Endothelial cell of umbilical vein (primary cell): ENCODE measurements at regions of chr2 and their contacts with region 1.

Region 1: DNA sequence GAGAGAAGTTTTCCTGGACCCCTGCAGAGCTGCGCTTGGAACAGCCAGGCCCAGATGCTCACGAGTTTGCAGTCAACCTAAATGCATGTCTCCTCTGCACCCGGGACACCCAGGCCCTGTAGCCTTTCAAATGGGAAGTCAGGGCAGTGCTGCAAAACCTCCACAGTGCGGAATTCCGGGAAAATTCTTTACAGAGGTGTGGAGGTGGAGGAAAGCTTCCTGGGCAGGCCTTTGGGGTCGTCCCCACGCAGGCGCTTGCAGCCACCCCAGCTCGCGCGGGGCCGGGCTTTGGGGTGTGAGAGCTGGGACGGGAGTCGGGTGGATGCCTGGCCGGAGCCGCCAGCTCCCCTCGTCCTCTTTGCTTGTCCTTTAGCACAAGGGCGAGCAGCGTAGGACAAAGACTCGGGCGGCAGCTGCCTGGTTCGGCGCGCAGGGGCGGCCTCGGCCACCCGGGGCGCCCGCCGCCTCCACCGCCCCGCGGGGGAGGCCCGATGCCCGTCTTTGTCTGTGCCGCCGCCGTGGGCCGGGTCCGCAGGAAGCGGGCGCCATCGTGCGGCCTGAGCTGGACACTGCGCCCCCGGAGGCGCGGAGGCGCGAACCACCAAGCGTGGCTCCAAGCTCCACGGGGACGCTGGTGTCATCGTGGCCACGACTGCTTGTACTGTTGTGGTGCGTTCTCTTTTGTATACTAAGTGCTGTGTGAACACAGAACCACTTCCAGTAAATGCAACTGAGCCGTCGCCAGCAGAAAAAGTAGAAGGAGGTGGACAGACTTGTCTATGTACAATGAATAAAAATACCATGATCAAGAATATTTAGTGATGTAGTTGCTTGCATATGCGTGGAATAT is 28.2 kb upstream of the BCL11A start:
- DNase-seq: peak; percentile 49
- H3K4me3 ChIP-seq: peak overlapping the region in 1 of 3 experiments; percentile 21
- H3K27ac ChIP-seq: no peak overlapping the region
- H3K4me1 ChIP-seq: no peaks in the 10 kb centered on the region
- H3K27me3 ChIP-seq: peaks cover 5 to 7% of the 10 kb centered on the region in 2 experiments
- CTCF ChIP-seq: peak; percentile 92 to 94
- POLR2A ChIP-seq: no peak

Region 2: DNA sequence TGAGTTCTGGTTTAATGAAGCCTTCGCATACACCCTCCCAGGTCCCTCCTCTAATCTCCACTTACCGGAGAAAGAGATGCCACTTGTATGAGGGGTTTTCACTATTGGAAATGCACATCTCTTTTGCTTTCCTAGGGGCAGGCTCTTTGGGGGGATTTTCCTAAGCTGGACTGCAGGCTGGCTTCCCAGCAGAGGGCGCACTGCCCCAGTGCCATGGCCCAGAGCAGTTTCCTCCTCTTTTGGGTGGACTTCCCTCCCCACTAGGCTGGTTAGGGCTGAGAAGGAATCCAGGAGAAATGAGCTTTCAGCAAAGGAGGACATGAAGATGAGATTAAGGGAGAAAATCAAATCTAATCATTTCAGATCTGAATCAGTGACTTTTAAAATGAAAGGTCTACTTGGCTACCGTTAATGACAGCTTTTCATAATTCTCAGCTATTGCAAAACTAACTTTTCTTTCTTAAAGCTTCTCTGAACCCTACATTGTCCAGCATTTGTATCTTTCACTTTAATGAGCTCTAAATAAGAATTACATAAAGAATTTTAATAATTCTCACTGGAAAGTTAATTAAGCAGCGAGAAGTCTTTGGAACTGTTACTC is 1556.4 kb before region 1 on chr2:
- CTCF ChIA-PET with region 1: interaction called, 22 read pairs
- POLR2A ChIA-PET with region 1: no interaction called
- dilution Hi-C with region 1: no loop called
- intact Hi-C with region 1: loop called (anchors 1 kb)
- DNase-seq: peak; percentile 8
- H3K4me3 ChIP-seq: no peak overlapping the region
- H3K27ac ChIP-seq: no peak overlapping the region
- H3K4me1 ChIP-seq: no peaks in the 10 kb centered on the region
- H3K27me3 ChIP-seq: no peaks in the 10 kb centered on the region
- CTCF ChIP-seq: peak; percentile 55 to 61
- POLR2A ChIP-seq: no peak

Region 3: GRCh38 chr2:60560734-60561644 is 20.7 kb before region 1 on chr2:
- CTCF ChIA-PET with region 1: interaction called, 124 read pairs
- POLR2A ChIA-PET with region 1: no interaction called
- dilution Hi-C with region 1: no loop called
- intact Hi-C with region 1: loop called (anchors 1 kb)
- DNase-seq: no peak
- H3K4me3 ChIP-seq: no peak overlapping the region
- H3K27ac ChIP-seq: no peak overlapping the region
- H3K4me1 ChIP-seq: no peaks in the 10 kb centered on the region
- H3K27me3 ChIP-seq: peaks cover 24 to 52% of the 10 kb centered on the region in 2 experiments
- CTCF ChIP-seq: peak; percentile 41 to 42
- POLR2A ChIP-seq: no peak

Region 4: GRCh38 chr2:60569680-60570111 is 12.0 kb before region 1 on chr2:
- CTCF ChIA-PET with region 1: interaction called, 14 read pairs
- POLR2A ChIA-PET with region 1: no interaction called
- dilution Hi-C with region 1: no loop called
- intact Hi-C with region 1: no loop called
- DNase-seq: no peak
- H3K4me3 ChIP-seq: no peak overlapping the region
- H3K27ac ChIP-seq: no peak overlapping the region
- H3K4me1 ChIP-seq: no peaks in the 10 kb centered on the region
- H3K27me3 ChIP-seq: peaks cover 32 to 62% of the 10 kb centered on the region in 2 experiments
- CTCF ChIP-seq: no peak
- POLR2A ChIP-seq: no peak